A549 (cell line): ENCODE measurements at regions of chr1 and their contacts with region 1.

Region 1: GRCh38 chr1:94237291-94238226 is at the start of gene ARHGAP29:
- DNase-seq: peak; percentile 48 to 79
- ATAC-seq: peak; percentile 92 to 93
- H3K4me3 ChIP-seq: peak within 1 kb of the TSS; percentile 84
- H3K27ac ChIP-seq: peak within 1 kb of the TSS; percentile 88 to 97
- H3K4me1 ChIP-seq: peaks cover 48% of the 10 kb centered on the region
- CTCF ChIP-seq: no peak
- EP300 ChIP-seq: no peak
- POLR2A ChIP-seq: peak; percentile 81
- RAD21 ChIP-seq: peak in 1 of 2 experiments; percentile 9; a peak in 1 of 5 replicates
- polyA plus RNA-seq, gene ARHGAP29: 22.0 and 29.7 TPM in 2 replicates

Region 2: GRCh38 chr1:94061513-94062443 is 175.8 kb before region 1 on chr1:
- CTCF ChIA-PET with region 1: interaction called, 21 read pairs
- POLR2A ChIA-PET with region 1: interaction called, 26 read pairs
- DNase-seq: peak; percentile 67 to 87
- ATAC-seq: peak; percentile 93 to 97
- H3K4me3 ChIP-seq: no peak overlapping the region
- H3K27ac ChIP-seq: peak overlapping the region; percentile 72 to 78
- H3K4me1 ChIP-seq: peaks cover 21% of the 10 kb centered on the region
- CTCF ChIP-seq: peak; percentile 76
- EP300 ChIP-seq: no peak
- POLR2A ChIP-seq: no peak
- RAD21 ChIP-seq: peak; percentile 91 to 93

Region 3: GRCh38 chr1:94068999-94069918 is 168.3 kb before region 1 on chr1:
- CTCF ChIA-PET with region 1: interaction called, 3 read pairs
- POLR2A ChIA-PET with region 1: interaction called, 10 read pairs
- DNase-seq: peak; percentile 47 to 73
- ATAC-seq: peak; percentile 88 to 96
- H3K4me3 ChIP-seq: no peak overlapping the region
- H3K27ac ChIP-seq: peak overlapping the region; percentile 86
- H3K4me1 ChIP-seq: peaks cover 34% of the 10 kb centered on the region
- CTCF ChIP-seq: no peak
- EP300 ChIP-seq: no peak; a peak in 1 of 5 replicates
- POLR2A ChIP-seq: no peak
- RAD21 ChIP-seq: no peak

Region 4: DNA sequence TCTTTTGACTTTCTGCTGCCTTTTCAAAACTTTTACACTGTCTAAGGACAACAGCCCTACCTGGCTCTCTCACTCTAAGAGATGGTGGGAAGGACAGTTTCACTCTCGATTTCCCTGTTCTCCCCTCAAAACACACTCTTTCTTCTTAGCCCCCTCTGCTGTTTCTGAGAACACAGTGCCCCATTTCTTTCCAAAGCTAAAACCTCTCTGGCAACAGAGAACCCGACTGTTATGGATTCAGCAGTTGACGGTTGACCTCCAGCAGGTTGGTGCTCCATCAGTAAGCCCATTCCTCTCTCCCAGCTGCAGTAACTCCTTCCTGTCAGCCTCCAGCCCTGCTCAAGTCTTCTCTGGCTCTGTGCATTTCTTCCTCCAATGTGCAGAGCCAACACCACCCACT is 92.4 kb after region 1 on chr1:
- CTCF ChIA-PET with region 1: interaction called, 34 read pairs
- POLR2A ChIA-PET with region 1: interaction called, 18 read pairs
- DNase-seq: peak in 1 of 2 experiments; percentile 37
- ATAC-seq: peak; percentile 22 to 48; a peak in 3 of 6 replicates
- H3K4me3 ChIP-seq: no peak overlapping the region
- H3K27ac ChIP-seq: peak overlapping the region; percentile 39 to 68; a peak in 5 of 6 replicates
- H3K4me1 ChIP-seq: peaks cover 54% of the 10 kb centered on the region
- CTCF ChIP-seq: peak; percentile 43
- EP300 ChIP-seq: no peak
- POLR2A ChIP-seq: no peak
- RAD21 ChIP-seq: peak; percentile 70 to 73